ENCODE measurements at regions of chr9 and their contacts with region 1.

Region 1: DNA sequence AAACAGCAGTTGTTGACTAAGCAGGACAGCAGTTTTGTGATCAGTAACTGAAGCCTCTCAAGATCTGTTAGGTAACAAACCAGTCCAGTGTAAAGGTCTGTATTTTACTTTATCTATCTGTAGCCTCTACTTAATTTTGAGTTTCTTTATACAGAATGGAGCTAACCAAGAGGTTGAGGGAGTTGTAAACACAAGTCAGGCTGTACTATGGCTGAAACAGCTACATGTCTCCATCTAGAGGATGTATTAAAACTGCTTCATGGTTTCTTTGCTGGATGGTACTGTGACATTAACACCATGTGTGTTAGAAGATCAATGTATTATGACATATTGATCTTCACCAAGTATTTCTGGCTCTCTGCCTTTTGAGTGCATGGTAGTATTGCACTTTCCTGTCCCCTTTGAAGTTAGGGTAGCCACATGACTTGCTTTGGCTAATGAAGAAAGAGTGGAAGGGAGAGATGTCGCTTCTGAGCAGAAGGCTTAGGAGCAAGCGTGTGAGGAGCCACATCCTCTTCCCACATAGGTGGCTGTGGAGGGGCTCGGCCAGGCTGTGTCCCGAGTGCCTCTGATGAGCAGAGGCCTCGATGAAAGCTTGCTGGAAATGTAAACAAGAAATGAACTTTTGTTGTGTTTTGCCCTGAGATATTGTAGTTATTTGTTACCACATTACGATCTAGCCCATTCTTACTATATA is 105.6 kb upstream of the PCA3 start:
- DNase-seq: no peak
- ATAC-seq: peak; percentile 77 to 85

Region 2: DNA sequence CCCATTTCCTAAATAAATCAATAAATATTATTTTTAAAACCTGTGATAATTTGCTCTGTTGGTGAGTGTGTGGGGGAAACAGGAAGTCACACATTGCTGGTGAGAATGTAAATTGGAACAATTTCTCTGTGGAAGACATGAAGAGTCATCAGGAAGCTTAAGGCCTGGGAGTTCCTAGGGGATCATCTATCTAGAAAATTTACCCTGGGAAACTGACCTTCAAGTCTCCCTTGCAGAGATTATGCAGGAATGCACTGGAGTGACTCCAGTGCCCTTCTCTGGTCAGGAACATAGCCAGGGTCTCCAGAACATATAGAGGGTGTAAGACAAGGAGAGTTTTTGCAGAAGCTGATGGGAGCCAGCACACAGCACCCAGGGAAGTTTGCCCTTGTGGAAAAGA is 212.7 kb before region 1 on chr9:
- intact Hi-C with region 1: loop called (anchors 5 kb)
- DNase-seq: no peak
- ATAC-seq: no peak

Region 3: DNA sequence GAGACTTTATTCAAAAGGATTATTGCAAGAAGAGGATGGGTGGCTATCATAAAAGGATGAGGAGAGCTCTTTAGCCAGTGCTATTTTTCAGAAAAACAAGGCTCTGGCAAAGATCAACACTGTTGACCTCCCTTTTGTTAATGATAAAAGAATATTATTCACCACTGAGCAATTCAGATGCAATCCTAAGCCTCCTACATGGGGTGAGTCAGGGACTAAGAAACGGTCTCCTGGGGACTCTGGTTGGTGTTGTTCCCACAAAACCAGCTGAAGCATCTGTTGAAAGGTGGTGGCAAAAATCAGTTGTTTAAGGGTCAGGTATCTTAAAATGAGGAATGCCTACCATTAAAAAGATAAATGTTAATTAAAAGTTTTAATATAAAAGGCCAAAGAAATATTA is 207.4 kb before region 1 on chr9:
- intact Hi-C with region 1: loop called (anchors 5 kb)
- DNase-seq: no peak
- ATAC-seq: peak in 1 of 2 donors; percentile 79

Region 4: DNA sequence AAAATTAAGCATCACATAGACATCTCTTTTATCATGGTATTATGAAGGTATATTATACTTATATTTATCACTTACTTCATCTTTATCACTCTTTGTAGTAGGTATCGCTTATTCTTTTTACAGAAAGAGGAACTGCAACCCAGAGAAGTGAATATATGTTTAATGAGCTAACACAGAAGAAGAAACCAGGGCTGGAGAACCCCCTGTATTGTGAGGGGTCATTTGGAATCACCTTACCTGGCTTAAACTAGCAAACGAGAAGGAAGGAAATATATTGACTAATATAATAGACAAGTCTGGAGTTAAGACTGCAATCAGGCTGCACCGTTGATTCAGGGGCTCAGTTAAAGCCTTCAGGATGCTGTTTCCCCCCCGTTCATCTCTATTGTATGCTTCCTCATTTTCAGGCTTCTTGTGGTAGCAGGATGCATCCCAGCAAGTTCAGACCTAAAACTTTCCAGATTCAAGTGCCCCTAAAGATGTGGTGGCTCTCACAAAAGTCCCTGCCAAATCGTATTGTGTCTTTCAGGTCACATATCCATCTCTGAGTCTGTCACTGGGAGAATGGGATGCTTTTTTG is 53.3 kb before region 1 on chr9:
- intact Hi-C with region 1: loop called in 1 of 2 experiments (anchors 10 kb)
- DNase-seq: no peak
- ATAC-seq: no peak